Activated CD4-positive, alpha-beta memory T cell treated with anti-CD3 and anti-CD28 coated beads, Interleukin-2, amount 10 ng/mL, durations not matched to agents 7 days and 5 days (primary cell): ENCODE measurements at regions of chr16 and their contacts with region 1.

Region 1: GRCh38 chr16:67555795-67556212 is 6.5 kb upstream of the CTCF start:
- DNase-seq: no peak
- H3K4me3 Mint-ChIP-seq: peak overlapping the region; percentile 19
- H3K27ac Mint-ChIP-seq: peak overlapping the region; percentile 97
- H3K4me1 Mint-ChIP-seq: peaks cover 53% of the 10 kb centered on the region
- H3K27me3 Mint-ChIP-seq: no peaks in the 10 kb centered on the region

Region 2: DNA sequence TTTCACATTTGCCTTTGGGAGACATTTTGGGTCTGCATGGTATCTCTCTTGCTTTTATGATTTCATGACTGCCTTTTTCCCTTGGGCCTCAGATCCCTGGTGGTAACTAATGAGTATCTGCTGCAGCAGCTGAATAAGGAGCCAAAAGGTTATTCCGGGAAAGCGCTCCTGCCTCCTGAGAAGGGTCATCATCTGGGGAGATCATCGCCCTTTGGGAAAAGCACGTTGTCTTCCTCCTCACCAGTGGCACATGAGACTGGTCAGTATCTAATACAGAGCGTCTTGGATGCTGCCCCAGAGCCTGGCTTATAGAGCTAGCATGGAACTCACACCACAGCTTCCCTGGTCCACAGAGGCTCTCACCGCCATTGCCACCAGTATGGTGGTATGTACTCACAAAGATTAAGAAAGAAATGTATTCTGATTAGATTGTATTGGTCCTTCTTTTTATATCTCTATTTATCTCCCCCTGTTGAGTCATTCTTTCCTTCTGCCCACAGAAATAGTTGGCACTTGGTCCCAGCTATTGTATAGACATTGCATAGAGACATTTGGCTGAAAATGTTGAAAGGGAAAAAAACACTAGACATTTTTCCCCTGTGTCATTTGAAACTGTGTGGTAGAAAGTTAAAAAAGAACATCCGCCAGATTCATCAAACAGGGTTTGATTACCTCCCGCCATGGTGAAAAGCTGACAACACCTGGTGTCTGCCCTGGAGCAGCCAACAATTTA is 170.9 kb before region 1 on chr16:
- CTCF ChIA-PET with region 1: no interaction called
- POLR2A ChIA-PET with region 1: no interaction called
- DNase-seq: no peak
- H3K4me3 Mint-ChIP-seq: no peak overlapping the region
- H3K27ac Mint-ChIP-seq: no peak overlapping the region
- H3K4me1 Mint-ChIP-seq: no peaks in the 10 kb centered on the region
- H3K27me3 Mint-ChIP-seq: peaks cover 20% of the 10 kb centered on the region

Region 3: DNA sequence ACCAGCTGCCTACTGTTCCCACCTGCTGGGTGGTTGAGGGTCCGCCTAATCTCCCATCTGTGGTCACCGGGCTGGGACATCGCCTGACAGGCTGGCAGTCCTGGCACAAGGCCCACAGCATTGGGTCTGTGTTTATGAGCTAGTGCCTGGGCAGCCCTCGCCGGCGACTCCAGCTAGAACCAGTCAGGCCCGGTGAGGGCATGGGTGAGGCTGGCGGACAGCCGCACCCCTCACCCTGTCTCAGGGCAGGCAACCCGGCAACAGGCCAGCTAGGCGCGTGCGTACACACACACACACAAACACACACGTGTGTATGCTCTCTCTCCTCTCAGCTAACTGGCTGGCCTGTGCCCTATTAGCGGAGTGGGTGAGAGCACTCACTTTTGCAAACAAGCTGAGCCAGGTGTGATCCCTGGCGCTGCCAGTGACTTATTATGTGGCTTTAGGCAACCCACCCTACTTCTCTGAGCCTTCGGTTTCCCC is 114.5 kb before region 1 on chr16:
- CTCF ChIA-PET with region 1: no interaction called
- POLR2A ChIA-PET with region 1: no interaction called
- DNase-seq: no peak
- H3K4me3 Mint-ChIP-seq: no peak overlapping the region
- H3K27ac Mint-ChIP-seq: no peak overlapping the region
- H3K4me1 Mint-ChIP-seq: no peaks in the 10 kb centered on the region
- H3K27me3 Mint-ChIP-seq: no peaks in the 10 kb centered on the region

Region 4: DNA sequence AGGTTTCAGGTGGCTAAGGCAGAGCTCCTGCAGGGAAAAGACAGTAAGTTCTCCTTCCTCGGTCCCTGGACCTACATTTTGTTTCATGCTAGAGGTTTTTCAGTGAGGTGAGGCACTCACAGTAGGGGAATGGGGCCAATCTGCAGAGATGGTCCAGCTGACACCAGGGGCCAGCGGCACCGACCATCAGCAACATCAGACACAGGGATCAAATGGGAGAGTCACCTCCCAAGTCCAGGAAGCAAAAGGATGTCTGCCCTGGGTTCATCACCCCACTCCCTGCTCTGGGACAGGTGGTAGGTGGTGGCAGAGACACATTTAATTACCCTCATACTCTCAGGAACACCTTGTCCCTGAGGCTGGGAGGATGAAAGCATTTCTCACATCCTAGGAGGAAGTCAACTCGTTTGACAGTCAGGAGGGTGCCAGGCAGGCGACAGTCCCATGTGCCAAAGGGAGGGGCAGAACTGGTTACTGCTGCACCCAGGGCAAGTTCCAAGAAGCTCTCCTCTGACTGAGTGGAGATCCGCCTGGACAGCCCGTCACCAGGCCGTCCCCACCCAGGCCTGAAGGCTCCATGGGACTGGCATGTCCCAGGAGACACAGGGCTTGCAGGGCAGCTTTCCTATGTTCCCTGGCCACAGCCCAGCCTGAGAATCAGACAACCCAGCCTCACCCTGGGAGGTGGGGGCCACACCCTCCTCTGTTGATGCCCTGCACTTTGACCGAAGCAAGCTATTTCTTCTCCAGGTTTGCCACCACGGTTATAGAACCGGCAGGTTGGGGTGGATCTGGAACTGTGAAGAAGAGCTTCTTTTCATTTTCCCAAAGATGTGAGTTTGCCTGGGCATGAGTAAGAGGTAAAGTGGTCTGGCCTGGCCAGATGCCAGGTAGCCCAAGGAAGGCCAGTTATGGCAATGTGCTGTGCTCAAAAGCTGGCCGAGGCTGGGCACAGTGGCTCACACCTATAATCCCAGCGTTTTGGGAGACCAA is 93.9 kb before region 1 on chr16:
- CTCF ChIA-PET with region 1: no interaction called
- POLR2A ChIA-PET with region 1: no interaction called
- DNase-seq: no peak
- H3K4me3 Mint-ChIP-seq: no peak overlapping the region
- H3K27ac Mint-ChIP-seq: no peak overlapping the region
- H3K4me1 Mint-ChIP-seq: peaks cover 11% of the 10 kb centered on the region
- H3K27me3 Mint-ChIP-seq: no peaks in the 10 kb centered on the region

Region 5: GRCh38 chr16:67504041-67505021 is 51.5 kb before region 1 on chr16:
- CTCF ChIA-PET with region 1: no interaction called
- POLR2A ChIA-PET with region 1: no interaction called
- DNase-seq: peak; percentile 85
- H3K4me3 Mint-ChIP-seq: no peak overlapping the region
- H3K27ac Mint-ChIP-seq: peak overlapping the region; percentile 97
- H3K4me1 Mint-ChIP-seq: peaks cover 49% of the 10 kb centered on the region
- H3K27me3 Mint-ChIP-seq: no peaks in the 10 kb centered on the region

Region 6: GRCh38 chr16:67660564-67661028 is 104.8 kb after region 1 on chr16 and contains the start of gene PARD6A:
- CTCF ChIA-PET with region 1: interaction called, 10 read pairs
- POLR2A ChIA-PET with region 1: interaction called, 71 read pairs
- DNase-seq: peak; percentile 97
- H3K4me3 Mint-ChIP-seq: peak within 1 kb of the TSS; percentile 89
- H3K27ac Mint-ChIP-seq: peak within 1 kb of the TSS; percentile 96
- H3K4me1 Mint-ChIP-seq: peaks cover 35% of the 10 kb centered on the region
- H3K27me3 Mint-ChIP-seq: no peaks in the 10 kb centered on the region
- total RNA-seq, gene PARD6A: 12.2 to 14.0 TPM